ENCODE measurements at regions of chr16 and their contacts with region 1.

Region 1: DNA sequence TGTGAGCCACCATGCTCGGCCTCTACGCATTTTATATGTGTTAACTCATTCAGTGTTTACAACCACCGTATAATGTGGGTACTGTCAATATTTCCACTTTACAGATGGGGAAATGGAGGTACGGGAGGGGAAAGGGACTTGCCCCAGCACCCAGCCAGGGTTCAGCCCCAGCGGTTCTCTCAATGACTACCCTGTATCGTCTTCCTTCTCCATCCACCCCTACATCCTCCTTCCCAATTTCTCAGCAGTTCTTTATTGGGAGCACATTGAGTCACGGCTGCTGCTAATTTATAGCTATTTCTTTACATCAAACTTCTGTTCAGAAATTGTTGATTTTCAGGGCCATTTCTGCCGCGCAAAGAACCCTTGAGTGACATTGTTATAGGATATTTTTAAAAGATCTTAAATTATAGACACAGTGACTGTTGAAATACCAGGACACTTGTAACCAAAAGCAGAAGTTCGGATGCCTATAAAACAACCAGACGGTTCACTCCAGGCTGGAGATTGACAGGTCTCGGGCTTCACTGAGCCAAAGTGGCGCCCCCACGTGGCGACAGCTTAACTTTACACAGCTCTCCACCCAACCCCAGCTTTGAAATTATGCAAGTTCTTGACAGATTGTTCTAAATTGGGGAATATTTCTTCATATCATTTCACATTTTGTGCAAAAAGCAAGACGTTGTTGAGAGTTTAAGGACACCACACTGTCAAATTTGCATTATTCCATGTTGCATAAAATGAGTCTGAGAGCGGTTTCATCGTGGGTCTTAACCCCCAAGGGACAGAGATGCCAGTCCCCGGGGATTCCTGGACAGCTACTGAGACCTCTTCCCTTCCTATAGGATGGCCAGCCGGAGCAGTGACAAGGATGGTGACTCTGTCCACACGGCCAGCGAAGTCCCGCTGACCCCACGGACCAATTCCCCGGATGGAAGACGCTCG is 11.8 kb downstream of the SYT17 start:
- DNase-seq: peak; percentile 71
- H3K4me3 ChIP-seq: no peak overlapping the region
- H3K27ac ChIP-seq: no peak overlapping the region
- H3K4me1 ChIP-seq: no peaks in the 10 kb centered on the region
- H3K27me3 ChIP-seq: no peaks in the 10 kb centered on the region
- CTCF ChIP-seq: peak; percentile 70

Region 2: DNA sequence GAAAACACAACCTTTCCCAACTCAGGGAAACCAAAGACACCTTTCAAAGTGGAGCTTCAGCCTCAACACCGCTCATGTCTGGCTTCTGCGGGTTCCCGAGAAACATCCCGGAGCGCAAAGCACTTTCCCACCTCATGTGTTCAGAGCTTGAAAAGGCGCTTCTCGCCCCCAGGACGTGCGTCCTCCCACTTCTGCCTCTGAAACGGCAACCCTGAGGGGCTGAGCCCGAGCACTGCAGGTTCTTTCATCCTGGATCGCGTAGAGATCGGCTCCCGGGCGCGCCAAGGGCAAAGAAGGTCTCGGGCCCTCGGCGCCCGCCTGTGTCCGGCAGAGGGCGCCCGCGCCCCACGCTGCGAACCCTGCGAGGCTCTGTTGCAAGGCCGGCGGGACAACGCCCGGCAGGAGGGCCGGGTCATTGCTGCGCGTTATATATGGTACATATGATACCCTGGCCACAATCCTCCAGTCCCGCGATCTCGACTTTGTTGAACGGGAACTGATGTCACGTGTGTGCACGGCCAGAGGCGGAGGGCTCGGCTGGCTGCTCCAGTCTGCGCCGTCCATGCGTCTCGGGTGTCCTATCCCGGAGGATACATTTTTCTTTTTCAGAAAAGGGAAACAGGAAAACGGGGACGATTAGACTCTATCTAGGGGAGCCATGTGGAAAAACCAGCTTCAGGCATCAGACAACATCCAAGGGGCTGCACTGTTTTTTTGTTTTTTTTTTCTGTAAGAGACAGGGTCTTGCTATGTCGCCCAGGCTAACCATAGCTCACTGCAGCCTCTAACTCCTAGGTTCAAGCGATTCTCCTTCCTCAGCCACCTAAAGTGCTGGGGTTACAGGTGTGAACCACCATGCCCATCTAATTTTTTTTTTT is 93.3 kb before region 1 on chr16:
- intact Hi-C with region 1: loop called (anchors 5 kb)
- DNase-seq: peak; percentile 91
- H3K4me3 ChIP-seq: peak overlapping the region; percentile 37
- H3K27ac ChIP-seq: peak overlapping the region; percentile 13
- H3K4me1 ChIP-seq: no peaks in the 10 kb centered on the region
- H3K27me3 ChIP-seq: no peaks in the 10 kb centered on the region
- CTCF ChIP-seq: peak; percentile 98